ENCODE measurements at regions of chr20 and their contacts with region 1.

Region 1: DNA sequence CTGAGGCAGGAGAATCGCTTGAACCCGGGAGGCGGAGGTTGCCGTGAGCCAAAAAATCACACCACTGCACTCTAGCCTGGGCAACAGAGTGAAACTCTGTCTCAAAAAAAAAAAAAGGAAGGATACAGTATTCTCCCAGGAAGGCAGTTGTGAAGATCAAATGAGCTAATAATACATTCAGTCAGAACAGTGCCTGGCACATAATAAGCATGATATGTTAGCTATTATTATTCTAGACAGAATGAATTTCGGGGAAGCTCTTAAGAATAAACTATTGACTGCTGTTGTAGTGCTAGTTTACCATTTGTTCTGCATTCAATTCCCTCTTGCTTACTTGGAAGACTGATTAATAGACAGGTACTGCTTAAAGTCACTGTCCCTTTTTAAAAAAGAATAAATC is 40.6 kb downstream of the NDUFAF5 start:
- DNase-seq: no peak
- H3K4me3 ChIP-seq: no peak overlapping the region
- H3K27ac ChIP-seq: no peak overlapping the region
- H3K4me1 ChIP-seq: 0 out of 7 replicates have a peak, but pooled peaks cover 0 to 2% (median 0%) of the 10 kb centered on the region in 4 experiments
- H3K27me3 ChIP-seq: no peaks in the 10 kb centered on the region
- CTCF ChIP-seq: no peak
- EP300 ChIP-seq: no peak
- POLR2A ChIP-seq: no peak
- RAD21 ChIP-seq: no peak

Region 2: DNA sequence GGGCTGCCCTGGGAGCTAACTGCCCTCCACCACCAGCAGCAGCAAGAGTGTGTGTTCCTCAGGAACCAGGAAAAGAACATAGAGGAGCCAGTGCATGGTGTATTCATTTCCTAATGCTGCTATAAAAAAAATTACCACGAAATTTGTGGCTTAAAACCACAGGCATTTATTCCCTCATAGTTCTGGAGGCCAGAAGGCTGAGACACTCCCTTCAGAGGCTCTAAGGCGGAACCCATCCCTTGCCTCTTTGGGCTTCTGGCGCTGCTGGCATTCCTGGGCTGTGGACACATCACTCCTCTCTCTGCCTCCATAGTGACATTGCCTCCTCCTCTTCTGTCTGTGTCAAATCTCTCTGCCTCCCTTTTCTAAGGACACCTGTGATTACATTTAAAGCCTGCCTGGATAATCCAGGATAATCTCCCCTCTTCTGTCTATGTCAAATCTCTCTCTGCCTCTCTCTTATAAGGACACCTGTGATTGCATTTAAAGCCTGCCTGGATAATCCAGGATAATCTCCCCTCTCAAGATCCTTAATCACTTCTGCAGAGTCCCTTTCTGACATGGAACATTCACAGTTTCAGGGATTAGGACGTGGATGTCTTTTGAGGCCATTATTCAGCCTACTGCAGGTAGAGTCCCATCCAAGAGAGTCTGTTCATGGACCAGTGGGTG is 14.1 kb after region 1 on chr20:
- CTCF ChIA-PET with region 1: interaction called, 12 read pairs
- POLR2A ChIA-PET with region 1: no interaction called
- DNase-seq: no peak
- H3K4me3 ChIP-seq: no peak overlapping the region
- H3K27ac ChIP-seq: no peak overlapping the region
- H3K4me1 ChIP-seq: no peaks in the 10 kb centered on the region
- H3K27me3 ChIP-seq: no peaks in the 10 kb centered on the region
- CTCF ChIP-seq: no peak
- EP300 ChIP-seq: no peak
- POLR2A ChIP-seq: no peak
- RAD21 ChIP-seq: no peak